PC-3 (cell line): ENCODE measurements at regions of chr7 and their contacts with region 1.

Region 1: DNA sequence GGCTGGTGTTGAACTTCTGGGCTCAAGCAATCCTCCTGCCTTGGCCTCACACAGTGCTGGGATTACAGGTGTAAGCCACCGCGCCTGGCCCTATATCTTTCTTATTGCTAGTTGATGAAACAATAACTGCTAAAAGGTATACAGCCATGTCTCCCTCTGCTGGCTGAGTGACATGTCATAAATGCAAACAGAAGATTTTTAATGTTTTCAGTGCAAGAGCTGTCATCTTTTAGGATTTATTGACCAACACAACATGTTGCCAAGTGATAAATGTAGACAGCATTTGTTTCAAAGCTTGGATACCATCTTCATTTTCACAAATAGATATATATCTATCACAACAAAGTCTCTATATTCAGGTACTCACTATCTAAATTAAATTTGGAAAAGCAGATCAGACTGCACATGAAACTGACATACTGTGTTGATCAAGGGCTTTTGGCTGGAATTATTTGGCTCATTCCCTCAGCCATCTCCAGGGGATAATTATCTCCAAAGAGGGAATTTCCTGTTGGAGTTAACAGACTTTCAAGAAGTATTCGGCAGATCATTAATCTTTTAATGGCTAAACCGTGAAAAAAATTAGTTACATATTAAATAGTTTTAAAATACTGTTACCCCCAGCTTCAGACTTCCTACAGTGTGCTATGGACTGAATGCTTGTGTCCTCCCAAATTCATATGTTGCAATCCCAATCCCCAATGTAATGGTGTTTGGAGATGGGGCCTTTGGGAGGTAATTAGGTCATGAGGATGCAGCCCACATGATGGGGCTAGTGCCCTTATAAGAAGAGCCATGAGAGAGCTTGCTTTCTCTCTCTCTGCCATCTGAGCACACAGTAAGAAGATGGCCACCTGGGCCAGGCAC is 41.3 kb upstream of the SRPK2 start:
- DNase-seq: peak; percentile 72
- ATAC-seq: peak; percentile 82
- H3K4me3 ChIP-seq: no peak overlapping the region
- H3K27ac ChIP-seq: no peak overlapping the region
- H3K4me1 ChIP-seq: no peaks in the 10 kb centered on the region
- H3K27me3 ChIP-seq: no peaks in the 10 kb centered on the region
- CTCF ChIP-seq: peak; percentile 65

Region 2: DNA sequence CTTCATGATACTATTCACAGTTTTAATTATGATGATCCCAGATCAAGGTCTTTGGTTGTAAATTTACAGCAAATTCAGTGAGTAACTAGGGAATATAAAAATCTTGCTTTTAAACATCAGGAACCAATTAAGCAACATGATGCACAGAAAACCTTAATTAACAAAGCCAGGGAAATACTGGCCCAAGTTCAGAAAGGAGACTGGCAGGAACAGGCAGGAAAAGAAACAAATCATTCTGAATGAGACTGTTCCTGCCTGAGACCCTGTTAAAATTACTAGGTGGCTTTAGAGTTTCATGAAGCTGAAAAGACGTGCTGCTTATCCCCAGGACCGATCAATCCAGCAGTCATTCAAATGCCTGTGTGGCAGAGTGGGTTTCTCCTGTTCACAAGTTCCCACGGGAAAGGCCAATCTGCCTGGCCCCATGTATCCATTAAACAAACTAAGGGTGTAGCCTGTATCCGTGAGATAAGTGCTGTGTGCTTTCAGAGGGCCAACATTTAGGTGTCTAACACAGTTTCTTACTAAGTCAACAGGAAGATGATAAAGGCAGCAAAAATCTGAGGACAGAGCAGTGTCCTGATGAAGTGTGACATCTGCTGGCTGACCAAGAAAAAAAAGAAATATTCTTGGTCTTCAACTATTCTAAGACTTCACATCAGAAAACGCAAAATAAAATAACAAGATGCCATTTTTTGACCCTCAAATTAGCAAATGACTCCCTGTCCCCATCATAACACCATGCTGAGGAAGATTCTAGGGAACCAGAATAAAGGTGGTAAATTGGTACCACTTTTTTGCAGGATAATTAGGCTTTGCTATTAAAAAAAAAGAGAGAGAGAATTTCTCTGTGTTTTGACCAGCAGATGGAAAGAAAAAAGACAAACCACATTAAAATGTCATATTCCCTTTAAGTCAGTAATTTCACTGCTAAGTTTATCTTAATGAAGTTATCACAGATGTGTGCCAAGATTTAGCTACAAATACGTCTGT is 57.9 kb after region 1 on chr7:
- CTCF ChIA-PET with region 1: no interaction called
- POLR2A ChIA-PET with region 1: no interaction called
- intact Hi-C with region 1: loop called (anchors 10 kb)
- DNase-seq: peak; percentile 58
- ATAC-seq: peak; percentile 99
- H3K4me3 ChIP-seq: no peak overlapping the region
- H3K27ac ChIP-seq: peak overlapping the region; percentile 71
- H3K4me1 ChIP-seq: peaks cover 9% of the 10 kb centered on the region
- H3K27me3 ChIP-seq: no peaks in the 10 kb centered on the region
- CTCF ChIP-seq: peak; percentile 66